Activated CD4-positive, alpha-beta T cell treated with anti-CD3 and anti-CD28 coated beads, Interleukin-2, amount 10 ng/mL, durations not matched to agents 24 days and 14 days (primary cell): ENCODE measurements at regions of chr14 and their contacts with region 1.

Region 1: DNA sequence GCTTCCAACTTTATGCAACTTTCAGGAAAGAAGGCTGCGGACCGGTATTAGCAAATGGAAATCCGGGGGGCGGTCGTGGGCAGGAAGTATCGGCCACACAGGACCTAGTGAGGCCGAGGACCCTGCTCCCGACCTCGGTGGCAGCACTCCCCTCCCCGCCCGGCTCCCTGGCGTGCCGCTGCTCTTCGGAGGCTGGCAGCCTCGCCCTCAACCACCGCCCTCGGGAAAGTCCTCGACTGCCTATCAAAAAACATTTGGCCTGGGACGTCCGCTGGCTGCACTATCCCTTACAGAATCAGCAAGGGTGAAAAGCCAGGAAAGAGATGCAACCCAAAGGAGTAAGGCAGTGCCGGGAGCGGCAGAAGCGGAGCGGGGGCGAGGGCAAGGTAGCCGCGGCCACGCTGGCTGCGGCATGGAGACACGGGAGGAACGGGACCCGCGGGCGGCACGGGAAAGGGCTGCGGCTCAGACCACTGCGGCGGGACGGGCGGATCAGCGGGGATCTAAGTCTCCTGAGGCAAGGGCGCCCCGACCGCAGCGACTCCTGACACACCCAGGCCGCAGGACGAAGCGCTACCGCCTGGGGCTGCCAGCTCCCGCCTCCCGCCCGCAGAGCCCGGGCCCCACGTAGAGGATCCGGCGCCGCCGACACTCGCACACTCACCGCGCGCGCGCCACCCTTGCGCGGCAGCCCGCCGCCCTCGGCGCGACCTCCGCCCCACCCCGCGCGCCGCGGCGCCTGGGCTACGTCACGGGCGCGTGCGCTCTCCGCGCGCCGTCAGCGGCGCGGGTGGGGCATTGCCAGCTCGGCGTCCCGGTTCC is at the starts of genes BBOF1 and ENTPD5:
- DNase-seq: peak; percentile 97
- H3K4me3 Mint-ChIP-seq: peak within 1 kb of the TSS; percentile 92
- H3K27ac Mint-ChIP-seq: peak within 1 kb of the TSS; percentile 97
- H3K4me1 Mint-ChIP-seq: peaks cover 17% of the 10 kb centered on the region
- H3K27me3 Mint-ChIP-seq: no peaks in the 10 kb centered on the region
- total RNA-seq, gene BBOF1: 0.57 and 0.72 TPM in 2 replicates
- total RNA-seq, gene ENTPD5: 10.6 and 12.2 TPM in 2 replicates

Region 2: GRCh38 chr14:73568381-73568781 is 450.4 kb before region 1 on chr14:
- intact Hi-C with region 1: loop called (anchors 2 kb)
- DNase-seq: peak; percentile 65
- H3K4me3 Mint-ChIP-seq: peak overlapping the region; percentile 93
- H3K27ac Mint-ChIP-seq: peak overlapping the region; percentile 98
- H3K4me1 Mint-ChIP-seq: peaks cover 31% of the 10 kb centered on the region
- H3K27me3 Mint-ChIP-seq: no peaks in the 10 kb centered on the region

Region 3: DNA sequence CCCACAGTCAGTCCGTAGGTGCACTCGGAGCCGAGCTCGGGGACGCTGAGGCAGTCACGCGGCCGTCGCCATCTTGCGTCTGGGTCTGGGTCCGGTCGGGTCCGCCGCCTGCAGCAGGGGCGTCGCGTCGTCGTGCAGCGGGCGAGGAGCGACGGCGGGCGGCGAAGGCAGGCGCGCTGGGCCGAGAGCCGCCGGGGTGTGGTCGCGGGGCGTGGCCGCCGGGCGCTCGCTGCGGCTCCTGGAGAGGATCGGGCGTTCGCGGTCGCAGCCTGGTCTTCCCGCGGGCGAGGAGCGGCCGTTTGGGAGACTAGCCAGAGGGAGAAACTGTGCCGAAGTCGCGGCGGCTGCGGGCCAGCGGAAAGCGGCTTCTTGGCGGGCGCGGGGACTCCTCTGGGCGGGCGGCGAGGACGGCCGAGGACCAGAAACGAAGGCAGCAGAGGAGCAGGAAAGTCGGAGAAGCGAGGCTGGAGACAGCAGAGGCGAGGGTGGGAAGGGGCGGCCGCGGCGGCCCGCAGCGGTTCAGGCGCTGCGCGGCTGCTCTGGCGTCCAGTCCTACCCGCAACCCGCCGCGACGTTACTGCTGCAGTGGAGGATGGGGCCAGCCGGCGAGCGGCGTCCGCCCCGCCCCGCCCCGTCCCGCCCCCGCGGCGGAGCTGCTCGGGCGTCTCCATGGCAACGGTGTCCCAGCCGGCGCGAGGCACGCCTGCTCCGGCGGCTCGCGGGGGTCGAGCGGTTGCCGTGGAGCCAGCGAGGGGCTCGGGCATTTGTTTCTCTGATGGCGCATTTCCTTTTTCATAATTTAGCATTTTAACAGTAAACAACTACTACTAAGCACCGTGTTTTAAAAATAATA is 304.8 kb before region 1 on chr14 and contains the start of gene PNMA1:
- intact Hi-C with region 1: loop called (anchors 5 kb)
- DNase-seq: peak; percentile 96
- H3K4me3 Mint-ChIP-seq: peak within 1 kb of the TSS; percentile 92
- H3K27ac Mint-ChIP-seq: peak within 1 kb of the TSS; percentile 93
- H3K4me1 Mint-ChIP-seq: peaks cover 27% of the 10 kb centered on the region
- H3K27me3 Mint-ChIP-seq: no peaks in the 10 kb centered on the region
- total RNA-seq, gene PNMA1: 29.7 and 30.4 TPM in 2 replicates

Region 4: DNA sequence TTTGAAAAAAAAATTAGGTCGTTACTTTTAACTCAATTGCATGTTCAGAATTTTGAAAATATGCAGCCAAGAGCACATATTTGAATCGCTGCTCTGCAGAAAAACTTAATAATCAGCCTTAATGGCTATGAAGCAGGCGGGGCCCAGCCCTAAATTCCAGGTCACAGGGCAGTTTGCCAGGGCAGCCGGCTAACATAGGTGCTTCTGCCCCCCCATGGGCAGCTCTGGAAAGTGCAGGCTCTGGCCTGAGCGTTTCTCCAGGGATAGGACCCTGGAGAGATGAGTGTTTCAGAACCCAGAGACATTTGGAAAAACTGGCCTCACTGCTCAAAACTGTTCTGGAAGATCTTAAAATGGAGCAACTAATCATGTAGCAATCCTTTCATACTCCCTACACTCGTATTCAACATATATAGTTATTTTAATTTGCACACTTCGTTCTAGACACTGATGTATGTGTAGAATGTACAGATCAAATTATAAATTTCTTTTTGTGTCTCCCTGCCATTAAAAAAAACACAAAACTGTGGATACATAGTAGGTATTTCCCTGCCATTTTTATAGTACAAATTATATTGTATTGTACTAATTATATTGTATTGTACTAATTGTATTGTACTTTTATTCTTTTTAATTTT is 193.1 kb before region 1 on chr14:
- intact Hi-C with region 1: no loop called
- DNase-seq: peak; percentile 91
- H3K4me3 Mint-ChIP-seq: no peak overlapping the region
- H3K27ac Mint-ChIP-seq: no peak overlapping the region
- H3K4me1 Mint-ChIP-seq: peaks cover 16% of the 10 kb centered on the region
- H3K27me3 Mint-ChIP-seq: peaks cover 5% of the 10 kb centered on the region

Region 5: GRCh38 chr14:73949744-73950734 is 68.8 kb before region 1 on chr14 and contains the starts of genes COQ6 and FAM161B:
- intact Hi-C with region 1: loop called (anchors 1 kb)
- DNase-seq: peak; percentile 98
- H3K4me3 Mint-ChIP-seq: peak within 1 kb of the TSS; percentile 99
- H3K27ac Mint-ChIP-seq: peak within 1 kb of the TSS; percentile 92
- H3K4me1 Mint-ChIP-seq: peaks cover 9% of the 10 kb centered on the region
- H3K27me3 Mint-ChIP-seq: no peaks in the 10 kb centered on the region
- total RNA-seq, gene COQ6: 16.6 and 20.1 TPM in 2 replicates
- total RNA-seq, gene FAM161B: 0.57 and 0.75 TPM in 2 replicates

Region 6: DNA sequence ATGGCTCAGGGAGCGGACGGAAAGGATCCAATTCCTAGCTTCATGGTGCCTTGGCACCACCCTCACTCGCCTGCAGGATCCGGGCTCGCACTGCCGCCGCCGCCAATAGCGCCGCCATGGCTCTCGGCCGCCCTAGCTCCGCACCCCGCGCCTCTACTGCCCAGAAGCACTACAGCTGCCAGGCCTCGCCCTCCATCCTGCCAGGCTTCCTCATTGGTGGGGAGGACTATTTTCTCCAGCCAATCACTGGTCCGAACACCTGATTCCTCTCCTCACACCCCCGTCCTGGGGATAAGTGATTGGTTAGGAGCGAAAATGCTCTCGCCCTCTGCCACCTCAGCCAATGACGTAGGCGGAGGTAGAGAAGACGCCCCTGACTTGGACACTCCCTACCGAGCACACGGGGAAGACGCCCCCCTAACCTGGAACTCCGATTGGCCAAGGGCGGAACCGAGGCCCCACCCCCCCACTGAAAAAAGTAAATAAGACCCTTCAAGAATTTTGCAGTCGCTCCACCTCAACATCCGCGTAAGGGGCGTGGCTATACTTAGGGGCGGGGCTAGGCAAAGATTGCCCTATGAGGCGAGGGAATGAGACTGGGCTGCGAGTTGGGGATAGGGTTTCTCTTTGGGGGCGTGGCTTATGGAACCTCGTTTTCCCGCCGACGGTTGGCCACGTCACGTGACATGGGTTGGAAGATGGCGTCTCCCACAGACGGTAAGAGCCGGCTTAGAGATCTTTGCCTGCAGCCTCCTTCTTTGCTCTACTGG is 65.7 kb after region 1 on chr14 and contains the starts of genes ALDH6A1 and LIN52:
- intact Hi-C with region 1: loop called (anchors 1 kb)
- DNase-seq: peak; percentile 100
- H3K4me3 Mint-ChIP-seq: peak within 1 kb of the TSS; percentile 99
- H3K27ac Mint-ChIP-seq: peak within 1 kb of the TSS; percentile 97
- H3K4me1 Mint-ChIP-seq: peaks cover 35% of the 10 kb centered on the region
- H3K27me3 Mint-ChIP-seq: no peaks in the 10 kb centered on the region
- total RNA-seq, gene ALDH6A1: 10.8 and 11.8 TPM in 2 replicates
- total RNA-seq, gene LIN52: 15.2 and 21.5 TPM in 2 replicates

Region 7: DNA sequence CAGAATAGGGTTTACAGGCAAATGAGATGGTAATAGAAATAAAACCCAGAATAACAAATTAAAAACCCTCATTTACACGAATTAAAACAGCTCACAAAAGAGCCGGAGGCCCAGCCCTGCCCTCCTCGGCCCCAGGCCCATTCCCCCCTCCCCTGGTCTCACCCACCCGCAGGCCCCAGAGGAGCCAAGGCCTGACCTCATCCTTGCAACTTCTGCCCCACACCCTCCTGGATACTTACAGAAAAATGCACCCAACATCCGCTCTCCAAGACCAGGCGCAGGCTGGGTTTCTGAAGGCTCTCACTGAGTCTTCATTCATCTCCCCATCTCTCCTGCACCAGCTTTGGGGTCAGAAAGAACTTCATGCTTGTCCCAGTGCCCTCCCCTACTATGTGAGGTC is 204.2 kb after region 1 on chr14:
- intact Hi-C with region 1: no loop called
- DNase-seq: no peak
- H3K4me3 Mint-ChIP-seq: no peak overlapping the region
- H3K27ac Mint-ChIP-seq: no peak overlapping the region
- H3K4me1 Mint-ChIP-seq: no peaks in the 10 kb centered on the region
- H3K27me3 Mint-ChIP-seq: peaks cover 15% of the 10 kb centered on the region